ENCODE measurements at regions of chr14 and their contacts with region 1.

Region 1: GRCh38 chr14:77616454-77617229 is at the start of gene SPTLC2:
- DNase-seq: peak; percentile 97
- ATAC-seq: peak; percentile 98
- H3K4me3 Mint-ChIP-seq: peak within 1 kb of the TSS; percentile 92
- H3K27ac Mint-ChIP-seq: peak within 1 kb of the TSS; percentile 91
- H3K4me1 Mint-ChIP-seq: peaks cover 28% of the 10 kb centered on the region
- H3K27me3 Mint-ChIP-seq: no peaks in the 10 kb centered on the region
- total RNA-seq, gene SPTLC2: 16.8 to 24.6 TPM

Region 2: GRCh38 chr14:77320238-77320935 is 296.3 kb before region 1 on chr14 and contains the start of gene POMT2:
- CTCF ChIA-PET with region 1: no interaction called
- POLR2A ChIA-PET with region 1: no interaction called
- intact Hi-C with region 1: loop called in 1 of 2 experiments (anchors 1 kb)
- DNase-seq: peak; percentile 95
- ATAC-seq: peak; percentile 53
- H3K4me3 Mint-ChIP-seq: peak within 1 kb of the TSS; percentile 92
- H3K27ac Mint-ChIP-seq: peak within 1 kb of the TSS; percentile 99
- H3K4me1 Mint-ChIP-seq: peaks cover 19% of the 10 kb centered on the region
- H3K27me3 Mint-ChIP-seq: no peaks in the 10 kb centered on the region
- total RNA-seq, gene POMT2: 11.7 to 18.2 TPM

Region 3: GRCh38 chr14:77580964-77581505 is 35.6 kb before region 1 on chr14:
- CTCF ChIA-PET with region 1: no interaction called
- POLR2A ChIA-PET with region 1: no interaction called
- intact Hi-C with region 1: loop called in 1 of 2 experiments (anchors 2 kb)
- DNase-seq: no peak
- ATAC-seq: peak; percentile 92
- H3K4me3 Mint-ChIP-seq: no peak overlapping the region
- H3K27ac Mint-ChIP-seq: no peak overlapping the region
- H3K4me1 Mint-ChIP-seq: peaks cover 28% of the 10 kb centered on the region
- H3K27me3 Mint-ChIP-seq: no peaks in the 10 kb centered on the region

Region 4: GRCh38 chr14:77641534-77642341 is 25.1 kb after region 1 on chr14:
- CTCF ChIA-PET with region 1: no interaction called
- POLR2A ChIA-PET with region 1: no interaction called
- intact Hi-C with region 1: loop called in 1 of 2 experiments (anchors 1 kb)
- DNase-seq: peak; percentile 87
- ATAC-seq: peak; percentile 94
- H3K4me3 Mint-ChIP-seq: peak overlapping the region; percentile 72
- H3K27ac Mint-ChIP-seq: peak overlapping the region; percentile 93
- H3K4me1 Mint-ChIP-seq: peaks cover 16% of the 10 kb centered on the region
- H3K27me3 Mint-ChIP-seq: no peaks in the 10 kb centered on the region

Region 5: GRCh38 chr14:77760381-77761246 is 144.0 kb after region 1 on chr14 and contains the start of gene SNW1:
- CTCF ChIA-PET with region 1: no interaction called
- POLR2A ChIA-PET with region 1: no interaction called
- intact Hi-C with region 1: loop called in 1 of 2 experiments (anchors 1 kb)
- DNase-seq: peak; percentile 95
- ATAC-seq: peak; percentile 96
- H3K4me3 Mint-ChIP-seq: peak within 1 kb of the TSS; percentile 96
- H3K27ac Mint-ChIP-seq: peak within 1 kb of the TSS; percentile 98
- H3K4me1 Mint-ChIP-seq: peaks cover 33% of the 10 kb centered on the region
- H3K27me3 Mint-ChIP-seq: no peaks in the 10 kb centered on the region
- total RNA-seq, gene SNW1: 134 to 135 TPM